ENCODE measurements at regions of chrX and their contacts with region 1.

Region 1: GRCh38 chrX:154411322-154411980 is at the start of gene TAFAZZIN:
- DNase-seq: peak in 1 of 2 experiments; percentile 75
- H3K4me3 ChIP-seq: peak within 1 kb of the TSS; percentile 47 to 69 (median 62)
- H3K27ac ChIP-seq: peak within 1 kb of the TSS; percentile 1; the same call in 1 of the 2 replicates
- H3K4me1 ChIP-seq: peaks cover 2 to 11% (median 3%) of the 10 kb centered on the region in 4 experiments; a peak in 4 of 7 replicates
- H3K27me3 ChIP-seq: no peaks in the 10 kb centered on the region
- CTCF ChIP-seq: no peak
- EP300 ChIP-seq: no peak
- POLR2A ChIP-seq: peak in 1 of 2 experiments; percentile 16; a peak in 1 of 3 replicates
- RAD21 ChIP-seq: no peak
- total RNA-seq, gene TAFAZZIN: 23.9 and 25.3 TPM in 2 replicates

Region 2: GRCh38 chrX:154370882-154371770 is 40.3 kb before region 1 on chrX:
- CTCF ChIA-PET with region 1: interaction called, 10 read pairs
- POLR2A ChIA-PET with region 1: interaction called, 14 read pairs
- DNase-seq: peak; percentile 56 to 82
- H3K4me3 ChIP-seq: peak overlapping the region; percentile 82 to 96 (median 90)
- H3K27ac ChIP-seq: peak overlapping the region; percentile 97
- H3K4me1 ChIP-seq: peaks cover 0 to 18% (median 11%) of the 10 kb centered on the region in 4 experiments; a peak in 6 of 7 replicates
- H3K27me3 ChIP-seq: no peaks in the 10 kb centered on the region; a peak in 2 of 7 replicates
- CTCF ChIP-seq: no peak
- EP300 ChIP-seq: no peak
- POLR2A ChIP-seq: peak in 1 of 2 experiments; percentile 96; a peak in 2 of 3 replicates
- RAD21 ChIP-seq: no peak

Region 3: GRCh38 chrX:154428176-154429010 is 16.9 kb after region 1 on chrX and contains the start of gene ATP6AP1:
- CTCF ChIA-PET with region 1: interaction called, 4 read pairs
- POLR2A ChIA-PET with region 1: interaction called, 12 read pairs
- DNase-seq: peak in 1 of 2 experiments; percentile 83
- H3K4me3 ChIP-seq: peak within 1 kb of the TSS; percentile 30 to 84 (median 56)
- H3K27ac ChIP-seq: no peak within 1 kb of the TSS
- H3K4me1 ChIP-seq: no peaks in the 10 kb centered on the region
- H3K27me3 ChIP-seq: no peaks in the 10 kb centered on the region
- CTCF ChIP-seq: no peak
- EP300 ChIP-seq: no peak
- POLR2A ChIP-seq: no peak; a peak in 1 of 3 replicates
- RAD21 ChIP-seq: no peak
- total RNA-seq, gene ATP6AP1: 44.6 and 46.7 TPM in 2 replicates

Region 4: GRCh38 chrX:154463611-154464220 is 52.3 kb after region 1 on chrX:
- CTCF ChIA-PET with region 1: no interaction called
- POLR2A ChIA-PET with region 1: no interaction called
- DNase-seq: no peak
- H3K4me3 ChIP-seq: no peak overlapping the region
- H3K27ac ChIP-seq: no peak overlapping the region
- H3K4me1 ChIP-seq: peaks cover 0 to under 1% (median 0%) of the 10 kb centered on the region in 4 experiments; a peak in 2 of 7 replicates
- H3K27me3 ChIP-seq: no peaks in the 10 kb centered on the region
- CTCF ChIP-seq: no peak
- EP300 ChIP-seq: no peak
- POLR2A ChIP-seq: no peak
- RAD21 ChIP-seq: no peak

Measured in H1 (cell line).